Naive thymus-derived CD4-positive, alpha-beta T cell (primary cell): ENCODE measurements at regions of chr6 and their contacts with region 1.

Region 1: DNA sequence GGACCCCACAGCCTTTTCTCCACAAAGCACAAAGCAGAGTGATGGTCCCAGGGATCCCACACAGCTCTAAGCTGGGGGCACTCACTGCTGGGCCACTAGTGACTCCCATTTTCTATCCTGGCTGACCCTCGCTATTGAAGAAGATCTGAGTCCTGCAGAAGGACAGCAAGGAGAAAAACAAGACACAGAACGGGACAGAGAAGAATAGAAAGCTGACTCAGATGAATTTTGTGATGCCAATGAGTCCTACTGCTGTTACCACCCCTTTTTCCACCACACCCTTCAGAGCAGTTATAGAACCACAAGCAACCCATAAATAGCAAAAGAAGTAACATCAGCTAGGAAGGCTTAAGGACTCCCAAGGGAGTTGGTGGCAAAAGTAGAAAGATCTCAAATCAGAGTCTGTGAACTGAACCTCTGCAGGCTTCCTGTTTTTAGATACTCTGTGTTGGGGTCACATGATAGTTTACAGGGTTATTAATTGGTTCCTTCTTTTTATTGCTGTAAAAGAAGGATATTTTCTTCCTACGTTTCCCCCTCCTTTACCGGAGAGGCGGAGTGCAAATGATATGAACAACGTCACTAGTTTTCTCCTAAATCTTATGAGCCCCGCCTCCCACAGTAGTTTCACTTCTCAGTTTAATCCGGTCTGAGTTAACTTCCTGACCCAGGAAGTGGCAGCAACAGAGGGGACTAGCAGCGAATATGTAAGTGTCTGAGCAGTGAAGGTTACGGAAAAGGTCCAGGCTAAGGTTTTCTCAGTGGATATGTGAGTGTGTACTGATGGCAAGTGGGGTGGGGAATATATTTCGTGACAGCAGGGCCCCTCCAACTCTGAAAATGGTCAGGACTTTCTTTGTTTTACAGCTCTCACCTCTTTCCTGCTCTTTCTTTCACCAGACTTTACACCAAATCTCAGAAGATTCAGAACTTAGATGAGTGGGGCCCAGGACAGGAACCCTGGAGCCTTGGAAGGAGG is at the start of gene TRIM38:
- DNase-seq: peak; percentile 22 to 90 (median 85)
- ATAC-seq: peak; percentile 95
- H3K4me3 ChIP-seq: peak within 1 kb of the TSS; percentile 73
- H3K4me3 Mint-ChIP-seq: peak within 1 kb of the TSS; percentile 92 to 100 (median 97)
- H3K27ac ChIP-seq: peak within 1 kb of the TSS; percentile 97
- H3K27ac Mint-ChIP-seq: peak within 1 kb of the TSS; percentile 97 to 100 (median 98)
- H3K4me1 ChIP-seq: peaks cover 61 to 75% of the 10 kb centered on the region in 2 donors
- H3K4me1 Mint-ChIP-seq: peaks cover 61 to 89% (median 84%) of the 10 kb centered on the region in 7 donors
- H3K27me3 ChIP-seq: no peaks in the 10 kb centered on the region
- H3K27me3 Mint-ChIP-seq: no peaks in the 10 kb centered on the region
- total RNA-seq, gene TRIM38: 17.4 to 32.8 (median 29.9) TPM

Region 2: DNA sequence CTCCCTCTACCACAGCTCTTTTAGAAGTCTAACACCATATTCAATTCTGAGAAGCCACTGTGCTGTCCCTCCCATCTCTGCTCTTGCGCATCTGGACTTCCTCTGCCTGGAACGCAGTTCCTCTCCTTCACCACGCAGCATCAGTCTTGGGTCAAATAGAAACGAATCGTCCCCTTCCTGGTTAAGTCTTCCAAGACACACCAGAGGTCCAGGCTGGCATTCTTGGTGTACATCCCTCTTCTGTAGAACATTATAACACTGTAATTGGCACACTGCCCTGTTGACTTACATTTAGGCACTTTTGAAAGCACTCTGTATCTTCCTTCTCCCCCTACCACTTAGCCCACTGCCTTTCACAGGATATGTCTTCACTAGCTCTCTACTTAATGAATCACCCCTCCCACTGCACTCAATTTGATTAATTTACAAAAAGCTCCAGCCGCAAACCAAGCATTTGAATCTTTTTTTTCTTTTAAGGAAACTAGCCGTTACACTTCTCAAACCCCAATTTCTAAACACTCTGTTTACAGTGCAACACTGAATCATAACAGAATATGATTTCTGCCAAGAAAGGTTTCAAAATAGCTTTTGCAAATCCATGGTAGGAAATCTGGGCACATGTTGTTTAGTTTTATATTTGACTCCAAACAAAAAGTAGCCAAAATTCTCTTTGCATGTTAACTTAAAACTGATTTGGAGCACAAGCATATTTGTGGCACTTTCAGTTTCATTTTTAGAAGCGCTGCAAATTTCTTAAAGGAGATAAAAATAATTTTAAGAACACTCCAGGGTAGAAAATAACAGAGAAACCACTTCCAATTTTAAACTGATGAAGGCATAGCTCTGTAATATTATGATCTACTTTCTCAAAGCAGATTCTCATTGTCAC is 824.0 kb before region 1 on chr6:
- CTCF ChIA-PET with region 1: no interaction called
- POLR2A ChIA-PET with region 1: no interaction called
- intact Hi-C with region 1: loop called (anchors 5 to 10 kb)
- DNase-seq: peak; percentile 14 to 67 (median 60)
- ATAC-seq: peak; percentile 94
- H3K4me3 ChIP-seq: peak overlapping the region; percentile 61
- H3K4me3 Mint-ChIP-seq: peak overlapping the region; percentile 84 to 98 (median 92)
- H3K27ac ChIP-seq: peak overlapping the region; percentile 76
- H3K27ac Mint-ChIP-seq: peak overlapping the region; percentile 87 to 97 (median 96)
- H3K4me1 ChIP-seq: peaks cover 12 to 16% of the 10 kb centered on the region in 2 donors
- H3K4me1 Mint-ChIP-seq: peaks cover 22 to 45% (median 27%) of the 10 kb centered on the region in 7 donors
- H3K27me3 ChIP-seq: no peaks in the 10 kb centered on the region
- H3K27me3 Mint-ChIP-seq: no peaks in the 10 kb centered on the region

Region 3: GRCh38 chr6:25866011-25866410 is 96.4 kb before region 1 on chr6:
- CTCF ChIA-PET with region 1: no interaction called
- POLR2A ChIA-PET with region 1: no interaction called
- intact Hi-C with region 1: loop called in 1 of 2 experiments (anchors 5 kb)
- DNase-seq: peak in 7 of 9 donors; percentile 60 to 82 (median 72)
- ATAC-seq: peak; percentile 95
- H3K4me3 ChIP-seq: no peak overlapping the region
- H3K4me3 Mint-ChIP-seq: peak overlapping the region in 7 of 10 donors; percentile 23 to 70 (median 54)
- H3K27ac ChIP-seq: no peak overlapping the region
- H3K27ac Mint-ChIP-seq: peak overlapping the region in 8 of 9 donors; percentile 6 to 91 (median 80)
- H3K4me1 ChIP-seq: peaks cover 13 to 20% of the 10 kb centered on the region in 2 donors
- H3K4me1 Mint-ChIP-seq: peaks cover 8 to 34% (median 31%) of the 10 kb centered on the region in 7 donors
- H3K27me3 ChIP-seq: no peaks in the 10 kb centered on the region
- H3K27me3 Mint-ChIP-seq: peaks cover 0 to 7% (median 0%) of the 10 kb centered on the region in 5 donors

Region 4: DNA sequence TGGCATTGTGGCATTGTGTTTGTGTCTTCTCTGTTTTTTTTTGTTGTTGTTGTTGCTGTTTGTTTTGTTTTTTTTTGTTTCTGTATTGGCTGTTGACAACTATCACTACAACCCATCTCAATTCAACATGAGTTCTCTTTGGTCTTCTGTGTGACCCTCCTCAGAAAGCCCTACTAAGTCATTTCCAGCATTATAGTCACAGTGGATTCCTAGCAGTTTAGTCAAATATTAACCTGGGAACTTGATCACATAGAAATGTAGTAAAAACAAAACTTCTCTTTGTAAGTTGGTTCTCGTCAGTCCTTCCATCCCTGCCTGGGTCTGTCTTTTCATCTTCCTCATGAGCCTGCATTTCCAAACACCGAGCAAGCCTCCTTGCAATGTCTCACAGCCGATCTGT is 48.7 kb before region 1 on chr6:
- CTCF ChIA-PET with region 1: no interaction called
- POLR2A ChIA-PET with region 1: no interaction called
- intact Hi-C with region 1: no loop called
- DNase-seq: no peak
- ATAC-seq: no peak
- H3K4me3 ChIP-seq: no peak overlapping the region
- H3K4me3 Mint-ChIP-seq: peak overlapping the region in 1 of 10 donors; percentile 1
- H3K27ac ChIP-seq: no peak overlapping the region
- H3K27ac Mint-ChIP-seq: peak overlapping the region in 1 of 9 donors; percentile 47
- H3K4me1 ChIP-seq: no peaks in the 10 kb centered on the region
- H3K4me1 Mint-ChIP-seq: peaks cover 0 to 17% (median 0%) of the 10 kb centered on the region in 7 donors
- H3K27me3 ChIP-seq: no peaks in the 10 kb centered on the region
- H3K27me3 Mint-ChIP-seq: peaks cover 0 to 5% (median 0%) of the 10 kb centered on the region in 5 donors

Region 5: GRCh38 chr6:25942561-25943147 is 19.8 kb before region 1 on chr6:
- CTCF ChIA-PET with region 1: interaction called, 4 read pairs
- POLR2A ChIA-PET with region 1: interaction called, 3 read pairs
- intact Hi-C with region 1: loop called in 1 of 2 experiments (anchors 1 kb)
- DNase-seq: peak in 6 of 9 donors; percentile 11 to 42 (median 27)
- ATAC-seq: peak; percentile 62
- H3K4me3 ChIP-seq: no peak overlapping the region
- H3K4me3 Mint-ChIP-seq: no peak overlapping the region
- H3K27ac ChIP-seq: no peak overlapping the region
- H3K27ac Mint-ChIP-seq: no peak overlapping the region
- H3K4me1 ChIP-seq: no peaks in the 10 kb centered on the region
- H3K4me1 Mint-ChIP-seq: peaks cover 4 to 26% (median 7%) of the 10 kb centered on the region in 7 donors
- H3K27me3 ChIP-seq: no peaks in the 10 kb centered on the region
- H3K27me3 Mint-ChIP-seq: peaks cover 0 to 3% (median 0%) of the 10 kb centered on the region in 5 donors

Region 6: GRCh38 chr6:26020329-26021000 is 58.0 kb after region 1 on chr6:
- CTCF ChIA-PET with region 1: no interaction called
- POLR2A ChIA-PET with region 1: interaction called, 41 read pairs
- intact Hi-C with region 1: loop called (anchors 1 kb)
- DNase-seq: peak; percentile 68 to 94 (median 91)
- ATAC-seq: peak; percentile 66
- H3K4me3 ChIP-seq: peak overlapping the region; percentile 96
- H3K4me3 Mint-ChIP-seq: peak overlapping the region; percentile 82 to 100 (median 94)
- H3K27ac ChIP-seq: peak overlapping the region; percentile 97
- H3K27ac Mint-ChIP-seq: peak overlapping the region; percentile 95 to 100 (median 100)
- H3K4me1 ChIP-seq: peaks cover 0 to 10% of the 10 kb centered on the region in 2 donors
- H3K4me1 Mint-ChIP-seq: peaks cover 10 to 62% (median 45%) of the 10 kb centered on the region in 7 donors
- H3K27me3 ChIP-seq: no peaks in the 10 kb centered on the region
- H3K27me3 Mint-ChIP-seq: peaks cover 0 to 6% (median 0%) of the 10 kb centered on the region in 5 donors

Region 7: GRCh38 chr6:26401987-26402658 is 439.7 kb after region 1 on chr6 and contains the start of gene BTN3A1:
- CTCF ChIA-PET with region 1: no interaction called
- POLR2A ChIA-PET with region 1: no interaction called
- intact Hi-C with region 1: no loop called
- DNase-seq: peak in 8 of 9 donors; percentile 65 to 85 (median 78)
- ATAC-seq: peak; percentile 93
- H3K4me3 ChIP-seq: peak within 1 kb of the TSS; percentile 95
- H3K4me3 Mint-ChIP-seq: peak within 1 kb of the TSS; percentile 94 to 100 (median 100)
- H3K27ac ChIP-seq: peak within 1 kb of the TSS; percentile 96
- H3K27ac Mint-ChIP-seq: peak within 1 kb of the TSS; percentile 97 to 100 (median 99)
- H3K4me1 ChIP-seq: peaks cover 35 to 37% of the 10 kb centered on the region in 2 donors
- H3K4me1 Mint-ChIP-seq: peaks cover 37 to 58% (median 53%) of the 10 kb centered on the region in 7 donors
- H3K27me3 ChIP-seq: no peaks in the 10 kb centered on the region
- H3K27me3 Mint-ChIP-seq: no peaks in the 10 kb centered on the region
- total RNA-seq, gene BTN3A1: 122 to 242 (median 235) TPM

Region 8: GRCh38 chr6:26596579-26597388 is 634.3 kb after region 1 on chr6 and contains the start of gene ABT1:
- CTCF ChIA-PET with region 1: no interaction called
- POLR2A ChIA-PET with region 1: no interaction called
- intact Hi-C with region 1: loop called in 1 of 2 experiments (anchors 2 kb)
- DNase-seq: peak; percentile 87 to 96 (median 95)
- ATAC-seq: peak; percentile 95
- H3K4me3 ChIP-seq: peak within 1 kb of the TSS; percentile 81
- H3K4me3 Mint-ChIP-seq: no peak within 1 kb of the TSS
- H3K27ac ChIP-seq: peak within 1 kb of the TSS; percentile 89
- H3K27ac Mint-ChIP-seq: peak within 1 kb of the TSS in 1 of 9 donors; percentile 92
- H3K4me1 ChIP-seq: peaks cover 17 to 22% of the 10 kb centered on the region in 2 donors
- H3K4me1 Mint-ChIP-seq: peaks cover 5 to 20% (median 10%) of the 10 kb centered on the region in 7 donors
- H3K27me3 ChIP-seq: peaks cover 8 to 14% of the 10 kb centered on the region in 2 donors
- H3K27me3 Mint-ChIP-seq: peaks cover 3 to 28% (median 16%) of the 10 kb centered on the region in 5 donors
- total RNA-seq, gene ABT1: 23.3 to 37.5 (median 35.0) TPM